Aorta (tissue), 5 donors: ENCODE measurements at regions of chr17 and their contacts with region 1.

Region 1: GRCh38 chr17:41322094-41322902 is 6.8 kb upstream of the KRTAP17-1 start:
- DNase-seq: no peak
- ATAC-seq: no peak
- H3K4me3 ChIP-seq: no peak overlapping the region
- H3K27ac ChIP-seq: no peak overlapping the region
- H3K4me1 ChIP-seq: no peaks in the 10 kb centered on the region
- H3K27me3 ChIP-seq: no peaks in the 10 kb centered on the region

Region 2: DNA sequence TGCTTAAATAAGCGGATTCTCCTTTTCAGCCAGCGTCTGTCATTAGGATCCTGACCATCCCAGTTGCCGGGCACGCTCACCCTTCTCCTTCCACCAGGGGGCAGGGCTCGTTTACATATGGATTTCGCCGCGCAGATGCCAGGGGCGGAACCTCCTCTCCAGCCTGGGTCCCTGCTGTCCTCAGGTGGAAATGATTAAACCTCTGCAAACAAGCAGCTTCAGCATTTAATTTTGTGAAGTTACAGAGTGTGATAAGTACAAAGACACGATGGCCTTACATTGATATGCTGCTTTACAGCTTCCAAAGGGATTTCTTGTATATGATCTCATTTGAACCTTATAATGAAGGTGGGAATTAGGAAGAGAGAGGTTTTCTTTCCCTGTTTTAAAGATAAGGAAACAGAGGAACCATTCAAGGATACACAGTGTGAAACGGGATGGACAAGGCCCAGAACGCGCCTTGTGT is 518.6 kb before region 1 on chr17:
- intact Hi-C with region 1: loop called in 1 of 2 experiments (anchors 5 kb)
- DNase-seq: peak; percentile 75 to 90
- ATAC-seq: peak; percentile 74
- H3K4me3 ChIP-seq: no peak overlapping the region
- H3K27ac ChIP-seq: no peak overlapping the region
- H3K4me1 ChIP-seq: no peaks in the 10 kb centered on the region
- H3K27me3 ChIP-seq: no peaks in the 10 kb centered on the region

Region 3: DNA sequence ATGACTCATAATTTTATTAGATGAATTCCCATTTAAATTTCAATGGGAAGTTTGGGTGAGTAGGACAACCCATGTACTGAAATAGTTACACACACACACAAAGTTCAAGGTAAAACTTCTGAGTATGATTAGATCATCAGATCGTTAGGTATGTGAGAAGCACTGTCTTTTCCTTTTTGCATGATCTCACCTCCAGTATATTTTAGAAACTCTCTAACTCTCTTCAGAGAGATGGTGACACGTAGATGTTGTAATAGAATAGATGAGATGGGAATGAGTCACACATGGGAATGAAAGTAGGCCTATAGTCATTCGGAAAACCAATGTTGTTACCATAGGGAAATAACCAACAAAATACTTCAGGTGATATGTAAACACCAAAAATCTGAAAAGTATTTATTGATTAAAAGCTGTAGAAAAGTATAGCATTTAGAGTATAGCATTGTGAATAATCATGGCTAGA is 407.1 kb before region 1 on chr17:
- intact Hi-C with region 1: loop called in 1 of 2 experiments (anchors 10 kb)
- DNase-seq: no peak
- ATAC-seq: no peak
- H3K4me3 ChIP-seq: no peak overlapping the region
- H3K27ac ChIP-seq: no peak overlapping the region
- H3K4me1 ChIP-seq: peaks cover 0 to 3% of the 10 kb centered on the region in 2 donors
- H3K27me3 ChIP-seq: no peaks in the 10 kb centered on the region

Region 4: DNA sequence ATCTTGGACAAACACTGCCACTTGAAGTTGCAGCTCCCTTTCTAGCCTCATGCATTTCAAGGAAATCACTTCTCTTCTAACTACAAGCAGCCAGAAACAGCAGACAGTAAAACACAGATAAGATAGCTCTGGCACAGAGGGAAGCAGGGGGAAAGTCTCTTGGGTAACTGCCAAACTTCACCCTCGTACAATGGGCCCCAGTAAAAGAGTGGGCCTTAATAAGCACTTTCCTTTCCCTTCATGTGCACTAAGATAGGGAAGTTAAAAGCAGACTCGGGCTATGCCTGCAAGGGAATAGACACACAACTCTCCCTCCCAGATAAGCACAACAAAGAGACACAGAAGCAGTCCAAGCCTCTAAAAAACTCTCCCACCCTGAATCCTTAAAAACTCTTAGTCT is 168.4 kb before region 1 on chr17:
- intact Hi-C with region 1: no loop called
- DNase-seq: no peak
- ATAC-seq: no peak
- H3K4me3 ChIP-seq: no peak overlapping the region
- H3K27ac ChIP-seq: no peak overlapping the region
- H3K4me1 ChIP-seq: no peaks in the 10 kb centered on the region
- H3K27me3 ChIP-seq: no peaks in the 10 kb centered on the region

Region 5: DNA sequence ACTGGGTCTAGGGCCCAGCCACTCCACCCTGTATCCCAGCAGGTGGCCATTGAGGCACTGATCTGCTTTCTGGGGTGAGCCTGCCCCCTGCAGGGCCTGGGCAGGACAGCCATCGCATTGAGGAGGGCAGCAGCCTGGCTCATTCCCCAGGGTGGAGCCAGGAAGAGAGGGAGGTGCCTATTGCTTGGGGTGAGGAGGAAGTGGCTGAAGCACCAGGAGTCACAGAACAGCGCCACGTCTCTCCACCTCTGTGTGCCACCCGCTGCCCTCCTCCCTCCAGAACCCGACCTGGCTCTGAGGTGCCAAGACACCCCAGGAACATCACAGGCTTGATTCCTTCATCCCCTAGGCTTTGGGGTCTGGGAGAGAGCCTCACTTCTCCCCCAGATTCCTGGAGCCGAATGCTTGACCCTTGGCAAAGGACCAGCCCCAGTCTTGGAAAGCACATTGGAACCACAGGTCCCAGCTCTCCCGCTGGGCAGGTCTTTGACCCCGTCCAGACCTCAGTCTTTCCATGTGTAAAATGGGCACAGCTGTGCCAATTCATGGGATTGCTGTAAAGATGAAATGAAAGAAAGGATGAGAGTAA is 174.6 kb after region 1 on chr17:
- intact Hi-C with region 1: no loop called
- DNase-seq: peak in 1 of 2 donors; percentile 82
- ATAC-seq: peak; percentile 78
- H3K4me3 ChIP-seq: no peak overlapping the region
- H3K27ac ChIP-seq: no peak overlapping the region
- H3K4me1 ChIP-seq: no peaks in the 10 kb centered on the region
- H3K27me3 ChIP-seq: no peaks in the 10 kb centered on the region